Activated naive CD4-positive, alpha-beta T cell treated with anti-CD3 and anti-CD28 coated beads for 36 hours (primary cell): ENCODE measurements at regions of chr4 and their contacts with region 1.

Region 1: GRCh38 chr4:83348074-83348473 is 13.4 kb upstream of the HPSE start:
- DNase-seq: no peak
- H3K4me3 Mint-ChIP-seq: no peak overlapping the region
- H3K27ac Mint-ChIP-seq: no peak overlapping the region
- H3K4me1 Mint-ChIP-seq: peaks cover 20% of the 10 kb centered on the region
- H3K27me3 Mint-ChIP-seq: no peaks in the 10 kb centered on the region

Region 2: GRCh38 chr4:82890901-82891706 is 457.0 kb before region 1 on chr4 and contains the start of gene SEC31A:
- CTCF ChIA-PET with region 1: interaction called, 7 read pairs
- intact Hi-C with region 1: loop called (anchors 1 kb)
- DNase-seq: peak; percentile 98
- H3K4me3 Mint-ChIP-seq: peak within 1 kb of the TSS; percentile 81
- H3K27ac Mint-ChIP-seq: peak within 1 kb of the TSS; percentile 89
- H3K4me1 Mint-ChIP-seq: peaks cover 49% of the 10 kb centered on the region
- H3K27me3 Mint-ChIP-seq: no peaks in the 10 kb centered on the region
- total RNA-seq, gene SEC31A: 85.1 to 85.7 TPM

Region 3: DNA sequence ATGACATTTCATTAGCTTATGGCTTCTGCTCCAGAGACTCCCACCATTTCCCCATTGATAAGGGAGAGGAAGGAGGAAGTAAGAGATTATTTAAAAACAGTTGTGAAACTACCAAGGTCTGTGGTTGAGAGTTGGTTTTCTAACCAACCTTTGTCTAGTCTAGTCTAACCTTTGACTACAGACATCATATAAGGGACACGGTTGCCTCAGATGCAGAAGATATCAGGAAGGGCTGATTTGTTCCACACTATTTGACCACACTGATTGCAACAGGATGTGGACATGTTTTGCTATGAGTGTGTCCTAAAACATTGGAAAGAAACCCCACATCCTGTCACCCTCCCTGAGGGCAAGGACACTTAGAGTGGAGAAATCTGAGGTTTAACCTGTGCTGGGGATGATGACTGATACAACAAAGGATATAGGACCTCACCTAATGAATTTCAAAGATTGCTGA is 116.4 kb before region 1 on chr4:
- CTCF ChIA-PET with region 1: no interaction called
- intact Hi-C with region 1: loop called (anchors 1 kb)
- DNase-seq: peak; percentile 68
- H3K4me3 Mint-ChIP-seq: no peak overlapping the region
- H3K27ac Mint-ChIP-seq: peak overlapping the region; percentile 16
- H3K4me1 Mint-ChIP-seq: peaks cover 46% of the 10 kb centered on the region
- H3K27me3 Mint-ChIP-seq: peaks cover 3% of the 10 kb centered on the region